GM12878 (cell line): ENCODE measurements at regions of chr14 and their contacts with region 1.

Region 1: DNA sequence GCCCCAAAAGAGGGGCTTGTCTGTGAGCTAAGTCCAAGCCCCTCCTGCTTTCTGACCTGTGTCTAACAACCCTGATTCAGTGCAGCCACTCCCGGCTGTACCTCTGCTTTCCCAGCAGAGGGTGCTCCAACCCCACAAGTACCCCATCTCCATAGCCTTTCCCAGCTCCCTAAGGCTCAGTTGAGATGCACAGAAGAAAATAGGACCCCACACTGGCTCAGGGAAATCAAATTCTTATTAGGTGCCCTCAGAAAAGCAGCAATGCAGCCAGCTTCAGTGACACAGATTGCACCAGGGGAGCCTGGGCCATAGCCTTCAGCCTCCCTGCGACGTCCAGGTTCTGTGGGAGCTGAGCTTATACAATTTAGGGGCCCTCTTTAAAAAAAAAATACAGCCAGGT is 49.9 kb downstream of the LRRC74A start:
- DNase-seq: no peak
- ATAC-seq: peak; percentile 92
- H3K4me3 ChIP-seq: no peak overlapping the region
- H3K27ac ChIP-seq: no peak overlapping the region
- H3K4me1 ChIP-seq: no peaks in the 10 kb centered on the region
- H3K27me3 ChIP-seq: no peaks in the 10 kb centered on the region; a peak in 1 of 4 replicates
- CTCF ChIP-seq: peak; percentile 90 to 94 (median 92)
- EP300 ChIP-seq: no peak
- POLR2A ChIP-seq: no peak
- RAD21 ChIP-seq: peak; percentile 97

Region 2: GRCh38 chr14:76710056-76711010 is 165.7 kb before region 1 on chr14:
- CTCF ChIA-PET with region 1: interaction called, 14 read pairs
- POLR2A ChIA-PET with region 1: no interaction called
- RAD21 ChIA-PET with region 1: interaction called, 13 read pairs
- SMC1A ChIA-PET with region 1: interaction called, 12 read pairs
- in situ Hi-C with region 1: no loop called
- intact Hi-C with region 1: loop called (anchors 1 kb)
- DNase-seq: no peak
- ATAC-seq: peak; percentile 64
- H3K4me3 ChIP-seq: no peak overlapping the region
- H3K27ac ChIP-seq: no peak overlapping the region
- H3K4me1 ChIP-seq: no peaks in the 10 kb centered on the region
- H3K27me3 ChIP-seq: no peaks in the 10 kb centered on the region; a peak in 2 of 4 replicates
- CTCF ChIP-seq: peak; percentile 65 to 73 (median 69)
- EP300 ChIP-seq: no peak
- POLR2A ChIP-seq: no peak
- RAD21 ChIP-seq: peak; percentile 74

Region 3: GRCh38 chr14:76910371-76910890 is 34.4 kb after region 1 on chr14:
- CTCF ChIA-PET with region 1: interaction called, 77 read pairs
- POLR2A ChIA-PET with region 1: interaction called, 4 read pairs
- RAD21 ChIA-PET with region 1: interaction called, 59 read pairs
- SMC1A ChIA-PET with region 1: interaction called, 38 read pairs
- in situ Hi-C with region 1: no loop called
- intact Hi-C with region 1: loop called (anchors 2 kb)
- DNase-seq: no peak
- ATAC-seq: no peak
- H3K4me3 ChIP-seq: no peak overlapping the region
- H3K27ac ChIP-seq: no peak overlapping the region
- H3K4me1 ChIP-seq: peaks cover 9% of the 10 kb centered on the region
- H3K27me3 ChIP-seq: no peaks in the 10 kb centered on the region
- CTCF ChIP-seq: no peak
- EP300 ChIP-seq: no peak
- POLR2A ChIP-seq: no peak
- RAD21 ChIP-seq: no peak

Region 4: DNA sequence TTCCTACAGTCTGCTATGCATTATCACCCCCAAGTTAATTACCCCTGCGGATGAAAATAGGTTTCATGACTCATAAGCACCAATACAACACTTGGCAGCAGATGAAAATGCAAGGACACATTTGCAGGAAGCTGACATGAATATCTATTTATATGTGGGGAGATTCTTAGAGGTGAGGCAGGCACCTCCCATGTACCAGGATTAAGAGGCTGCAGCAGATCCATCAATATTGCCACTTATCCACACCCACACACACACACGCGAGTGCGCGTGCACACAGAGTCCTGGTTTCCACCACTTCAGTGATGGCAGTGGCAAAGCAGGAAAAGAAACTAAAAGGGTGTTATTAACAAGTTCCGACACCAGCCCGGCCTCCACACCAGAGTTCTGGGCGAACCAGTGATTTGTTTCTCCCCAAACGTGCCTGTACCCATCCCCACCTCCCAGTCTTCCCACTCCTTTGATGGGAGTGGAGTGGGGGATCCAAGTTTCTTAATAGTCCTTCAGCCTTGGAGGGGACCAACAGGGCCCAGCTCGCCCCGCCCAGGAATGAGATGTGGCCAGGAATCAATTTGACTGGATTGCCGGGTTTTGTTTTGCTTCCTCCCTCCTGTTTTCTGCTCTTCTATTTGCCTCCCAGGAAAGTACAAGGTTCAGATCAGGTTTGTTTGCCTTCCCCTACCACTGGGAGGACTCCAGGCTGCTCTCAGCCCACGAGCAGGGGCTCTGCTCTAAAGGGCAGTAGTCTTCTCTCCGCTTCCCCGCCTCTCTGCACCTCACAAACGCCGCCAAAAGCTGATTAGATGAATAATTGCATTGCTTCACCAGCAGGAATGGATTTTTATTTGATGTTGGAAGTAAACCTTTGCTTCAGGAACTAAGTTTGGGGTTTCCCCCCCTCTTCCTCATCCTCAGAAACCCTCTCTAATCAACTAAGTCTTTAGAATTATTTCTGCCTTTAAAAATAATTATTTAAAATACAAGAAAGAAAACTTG is 147.2 kb after region 1 on chr14:
- CTCF ChIA-PET with region 1: interaction called, 10 read pairs
- POLR2A ChIA-PET with region 1: no interaction called
- RAD21 ChIA-PET with region 1: no interaction called
- SMC1A ChIA-PET with region 1: no interaction called
- in situ Hi-C with region 1: no loop called
- intact Hi-C with region 1: no loop called
- DNase-seq: no peak
- ATAC-seq: peak; percentile 7
- H3K4me3 ChIP-seq: no peak overlapping the region
- H3K27ac ChIP-seq: peak overlapping the region; percentile 56
- H3K4me1 ChIP-seq: peaks cover 51% of the 10 kb centered on the region
- H3K27me3 ChIP-seq: no peaks in the 10 kb centered on the region
- CTCF ChIP-seq: 0 out of 6 replicates have a peak, but pooled peaks of 2 of the 3 experiments have one; percentile 2 to 14
- EP300 ChIP-seq: no peak
- POLR2A ChIP-seq: no peak
- RAD21 ChIP-seq: no peak

Region 5: GRCh38 chr14:77067632-77068514 is 191.8 kb after region 1 on chr14:
- CTCF ChIA-PET with region 1: interaction called, 848 read pairs
- POLR2A ChIA-PET with region 1: interaction called, 8 read pairs
- RAD21 ChIA-PET with region 1: interaction called, 498 read pairs
- SMC1A ChIA-PET with region 1: interaction called, 370 read pairs
- in situ Hi-C with region 1: loop called (anchors 10 kb)
- intact Hi-C with region 1: loop called (anchors 1 kb)
- DNase-seq: no peak
- ATAC-seq: peak; percentile 85
- H3K4me3 ChIP-seq: no peak overlapping the region
- H3K27ac ChIP-seq: no peak overlapping the region
- H3K4me1 ChIP-seq: peaks cover 14% of the 10 kb centered on the region
- H3K27me3 ChIP-seq: peaks cover 0 to 10% of the 10 kb centered on the region in 2 experiments; a peak in 2 of 4 replicates
- CTCF ChIP-seq: peak; percentile 89 to 96 (median 96); a peak in 5 of 6 replicates
- EP300 ChIP-seq: no peak
- POLR2A ChIP-seq: no peak
- RAD21 ChIP-seq: peak; percentile 88

Region 6: GRCh38 chr14:77097700-77098528 is 221.8 kb after region 1 on chr14 and contains the start of gene CIPC:
- CTCF ChIA-PET with region 1: interaction called, 205 read pairs
- POLR2A ChIA-PET with region 1: no interaction called
- RAD21 ChIA-PET with region 1: interaction called, 51 read pairs
- SMC1A ChIA-PET with region 1: interaction called, 50 read pairs
- in situ Hi-C with region 1: no loop called
- intact Hi-C with region 1: loop called (anchors 1 kb)
- DNase-seq: peak; percentile 97
- ATAC-seq: peak; percentile 90
- H3K4me3 ChIP-seq: peak within 1 kb of the TSS; percentile 83
- H3K27ac ChIP-seq: peak within 1 kb of the TSS; percentile 87
- H3K4me1 ChIP-seq: peaks cover 17% of the 10 kb centered on the region
- H3K27me3 ChIP-seq: no peaks in the 10 kb centered on the region
- CTCF ChIP-seq: peak in 1 of 3 experiments; percentile 7; a peak in 1 of 6 replicates
- EP300 ChIP-seq: peak in 1 of 2 experiments; percentile 78; a peak in 2 of 4 replicates
- POLR2A ChIP-seq: peak; percentile 86
- RAD21 ChIP-seq: no peak
- polyA plus RNA-seq, gene CIPC: 5.6 to 6.6 TPM

Region 7: GRCh38 chr14:77212943-77213678 is 337.0 kb after region 1 on chr14:
- CTCF ChIA-PET with region 1: interaction called, 6 read pairs
- POLR2A ChIA-PET with region 1: no interaction called
- RAD21 ChIA-PET with region 1: interaction called, 4 read pairs
- SMC1A ChIA-PET with region 1: interaction called, 10 read pairs
- in situ Hi-C with region 1: no loop called
- intact Hi-C with region 1: no loop called
- DNase-seq: no peak
- ATAC-seq: peak; percentile 97
- H3K4me3 ChIP-seq: no peak overlapping the region
- H3K27ac ChIP-seq: no peak overlapping the region
- H3K4me1 ChIP-seq: no peaks in the 10 kb centered on the region
- H3K27me3 ChIP-seq: 0 out of 4 replicates have a peak, but pooled peaks cover 0 to 4% of the 10 kb centered on the region in 2 experiments
- CTCF ChIP-seq: peak; percentile 70 to 89 (median 83)
- EP300 ChIP-seq: no peak
- POLR2A ChIP-seq: no peak
- RAD21 ChIP-seq: peak; percentile 66